Calu3 (cell line): ENCODE measurements at regions of chr11 and their contacts with region 1.

Region 1: GRCh38 chr11:45102810-45103621 is 43.4 kb upstream of the PRDM11 start:
- DNase-seq: peak; percentile 62
- H3K4me3 Mint-ChIP-seq: no peak overlapping the region
- H3K27ac Mint-ChIP-seq: no peak overlapping the region
- H3K4me1 Mint-ChIP-seq: peaks cover 7% of the 10 kb centered on the region
- H3K27me3 Mint-ChIP-seq: peaks cover 80% of the 10 kb centered on the region
- CTCF ChIP-seq: peak; percentile 93

Region 2: DNA sequence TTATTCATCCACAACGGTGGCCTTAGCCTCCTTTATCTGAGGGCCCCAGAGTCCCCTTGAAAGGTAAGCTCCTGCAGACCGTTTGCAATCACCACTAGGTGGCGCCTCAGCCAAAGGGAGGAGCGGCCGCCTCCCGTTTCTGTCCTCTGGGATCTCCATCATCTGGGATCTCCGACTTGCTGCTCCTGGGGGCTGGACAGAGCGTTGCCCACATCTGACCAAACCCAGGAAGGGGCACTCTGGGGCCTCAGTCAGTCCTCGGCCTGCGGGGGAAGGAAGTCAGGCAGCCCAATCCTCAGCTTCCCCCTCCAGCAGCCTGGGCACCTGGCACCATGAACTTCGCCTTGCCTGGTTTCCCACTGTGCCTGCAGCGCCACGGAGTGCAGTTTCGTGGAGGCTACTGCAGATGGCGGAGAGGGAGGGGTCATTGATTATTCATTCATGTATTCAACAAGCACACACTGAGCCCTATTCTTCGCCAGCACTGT is 175.8 kb before region 1 on chr11:
- CTCF ChIA-PET with region 1: interaction called, 116 read pairs
- intact Hi-C with region 1: loop called (anchors 1 kb)
- DNase-seq: peak; percentile 86
- H3K4me3 Mint-ChIP-seq: no peak overlapping the region
- H3K27ac Mint-ChIP-seq: no peak overlapping the region
- H3K4me1 Mint-ChIP-seq: no peaks in the 10 kb centered on the region
- H3K27me3 Mint-ChIP-seq: peaks cover 64% of the 10 kb centered on the region
- CTCF ChIP-seq: peak; percentile 88